ENCODE measurements at regions of chr3 and their contacts with region 1.

Region 1: DNA sequence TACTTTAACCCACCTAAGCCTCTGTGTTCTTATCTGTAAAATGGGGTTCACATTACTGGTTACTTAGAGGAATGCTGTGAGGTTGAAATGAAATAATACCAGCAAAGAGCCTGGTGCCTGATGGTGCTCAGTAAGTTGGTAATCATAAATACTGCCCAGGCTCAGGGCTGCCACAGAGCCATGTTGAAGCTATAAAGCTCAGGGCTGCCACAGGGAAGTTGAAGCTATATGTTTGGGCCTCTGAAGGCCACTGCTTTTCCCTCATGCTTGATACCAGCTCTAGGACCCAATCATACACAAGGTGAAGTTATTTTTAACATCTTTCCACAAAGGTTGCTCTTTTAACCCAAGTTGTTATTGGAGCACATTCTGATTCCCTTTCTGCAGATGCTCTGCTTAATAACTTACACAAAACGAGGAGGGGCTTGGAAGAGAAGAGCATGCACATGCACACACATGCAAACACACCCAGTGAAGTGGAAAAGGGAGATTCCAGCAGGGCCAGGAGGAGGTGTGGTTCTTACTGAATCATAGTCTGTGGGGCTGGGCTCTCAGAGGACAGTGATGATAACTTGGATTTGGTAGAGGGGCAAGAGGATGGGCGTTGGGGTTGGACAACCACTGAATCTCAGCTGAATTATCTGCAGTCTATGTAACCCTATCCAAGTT is 17.4 kb downstream of the PARP14 start:
- H3K4me3 ChIP-seq: no peak overlapping the region
- H3K27ac ChIP-seq: no peak overlapping the region
- H3K4me1 ChIP-seq: no peaks in the 10 kb centered on the region
- CTCF ChIP-seq: no peak

Region 2: GRCh38 chr3:122754929-122755328 is 56.8 kb after region 1 on chr3:
- CTCF ChIA-PET with region 1: interaction called, 10 read pairs
- POLR2A ChIA-PET with region 1: no interaction called
- H3K4me3 ChIP-seq: no peak overlapping the region
- H3K27ac ChIP-seq: no peak overlapping the region
- H3K4me1 ChIP-seq: no peaks in the 10 kb centered on the region
- CTCF ChIP-seq: no peak